ENCODE measurements at regions of chr11 and their contacts with region 1.

Region 1: GRCh38 chr11:66344550-66345315 is at the start of gene BRMS1:
- DNase-seq: peak; percentile 99
- H3K4me3 Mint-ChIP-seq: peak within 1 kb of the TSS; percentile 93
- H3K27ac Mint-ChIP-seq: peak within 1 kb of the TSS; percentile 85
- H3K4me1 Mint-ChIP-seq: peaks cover 42% of the 10 kb centered on the region
- H3K27me3 Mint-ChIP-seq: peaks cover 3% of the 10 kb centered on the region
- total RNA-seq, gene BRMS1: 24.0 to 25.3 TPM

Region 2: DNA sequence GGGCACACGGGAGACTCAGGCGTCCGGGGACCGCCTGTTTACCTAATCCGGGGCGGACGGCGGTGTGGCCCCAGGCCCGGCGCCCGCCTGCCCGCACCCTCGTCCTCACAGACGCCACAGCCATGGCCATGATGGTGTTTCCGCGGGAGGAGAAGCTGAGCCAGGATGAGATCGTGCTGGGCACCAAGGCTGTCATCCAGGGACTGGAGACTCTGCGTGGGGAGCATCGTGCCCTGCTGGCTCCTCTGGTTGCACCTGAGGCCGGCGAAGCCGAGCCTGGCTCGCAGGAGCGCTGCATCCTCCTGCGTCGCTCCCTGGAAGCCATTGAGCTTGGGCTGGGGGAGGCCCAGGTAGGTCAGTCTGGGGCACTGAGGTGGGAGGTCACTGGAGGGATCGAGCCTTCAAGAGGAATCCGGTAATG is 86.2 kb before region 1 on chr11:
- CTCF ChIA-PET with region 1: interaction called, 4 read pairs
- intact Hi-C with region 1: loop called (anchors 1 kb)
- DNase-seq: no peak
- H3K4me3 Mint-ChIP-seq: peak overlapping the region; percentile 95
- H3K27ac Mint-ChIP-seq: peak overlapping the region; percentile 79
- H3K4me1 Mint-ChIP-seq: peaks cover 30% of the 10 kb centered on the region
- H3K27me3 Mint-ChIP-seq: no peaks in the 10 kb centered on the region

Region 3: DNA sequence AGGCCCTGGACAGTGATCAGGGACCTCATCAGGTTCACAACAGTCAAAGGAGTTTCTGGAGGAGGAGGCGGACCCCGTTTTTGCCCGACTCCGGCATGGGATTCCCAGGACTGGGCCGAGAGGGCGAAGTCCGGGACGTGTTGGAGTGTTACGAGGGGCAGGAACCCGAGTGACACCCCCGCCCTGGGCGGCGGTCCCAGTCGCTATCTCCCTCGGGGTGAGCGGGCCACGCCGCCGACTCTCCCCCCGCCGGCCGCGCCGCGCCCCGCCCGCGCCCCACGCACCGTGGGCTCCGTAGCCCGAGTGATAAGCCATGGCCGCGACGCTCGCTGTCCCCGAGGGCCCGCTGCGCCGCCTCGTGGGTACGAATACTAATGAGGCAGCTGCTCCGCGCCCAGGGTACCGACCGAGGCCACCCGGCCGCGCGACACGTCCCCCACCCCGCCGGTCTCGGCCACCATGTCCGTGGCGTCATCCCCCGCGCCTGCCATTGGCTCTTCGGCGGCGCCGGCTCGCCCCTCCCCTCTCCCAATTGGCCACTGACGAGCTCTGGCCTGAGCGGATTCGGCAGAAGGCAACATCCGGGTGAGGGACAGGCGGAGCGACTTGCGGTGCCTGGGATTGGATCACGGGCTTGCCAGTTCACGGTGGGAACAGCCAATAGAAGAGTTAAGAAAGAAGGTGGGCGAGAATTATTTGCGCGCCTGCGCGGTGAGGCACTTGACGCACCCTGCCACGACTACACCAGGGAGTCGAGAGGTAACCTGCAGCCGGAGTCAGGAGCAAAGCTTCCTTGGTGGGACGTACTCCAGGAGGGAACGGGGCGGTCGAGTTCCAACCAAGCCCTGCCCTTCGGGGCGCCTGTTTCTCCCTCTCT is 55.8 kb before region 1 on chr11 and contains the start of gene YIF1A:
- CTCF ChIA-PET with region 1: no interaction called
- intact Hi-C with region 1: loop called (anchors 1 kb)
- DNase-seq: peak; percentile 99
- H3K4me3 Mint-ChIP-seq: peak within 1 kb of the TSS; percentile 81
- H3K27ac Mint-ChIP-seq: peak within 1 kb of the TSS; percentile 70
- H3K4me1 Mint-ChIP-seq: peaks cover 35% of the 10 kb centered on the region
- H3K27me3 Mint-ChIP-seq: peaks cover 18% of the 10 kb centered on the region
- total RNA-seq, gene YIF1A: 45.9 to 49.7 TPM

Region 4: GRCh38 chr11:66311965-66312548 is 32.7 kb before region 1 on chr11:
- CTCF ChIA-PET with region 1: interaction called, 32 read pairs
- intact Hi-C with region 1: loop called (anchors 1 kb)
- DNase-seq: peak; percentile 96
- H3K4me3 Mint-ChIP-seq: peak overlapping the region; percentile 92
- H3K27ac Mint-ChIP-seq: peak overlapping the region; percentile 93
- H3K4me1 Mint-ChIP-seq: peaks cover 33% of the 10 kb centered on the region
- H3K27me3 Mint-ChIP-seq: no peaks in the 10 kb centered on the region

Region 5: GRCh38 chr11:66328307-66329144 is 16.2 kb before region 1 on chr11:
- CTCF ChIA-PET with region 1: interaction called, 3 read pairs
- intact Hi-C with region 1: loop called (anchors 1 kb)
- DNase-seq: peak; percentile 90
- H3K4me3 Mint-ChIP-seq: peak overlapping the region; percentile 34
- H3K27ac Mint-ChIP-seq: peak overlapping the region; percentile 74
- H3K4me1 Mint-ChIP-seq: peaks cover 38% of the 10 kb centered on the region
- H3K27me3 Mint-ChIP-seq: no peaks in the 10 kb centered on the region

Region 6: DNA sequence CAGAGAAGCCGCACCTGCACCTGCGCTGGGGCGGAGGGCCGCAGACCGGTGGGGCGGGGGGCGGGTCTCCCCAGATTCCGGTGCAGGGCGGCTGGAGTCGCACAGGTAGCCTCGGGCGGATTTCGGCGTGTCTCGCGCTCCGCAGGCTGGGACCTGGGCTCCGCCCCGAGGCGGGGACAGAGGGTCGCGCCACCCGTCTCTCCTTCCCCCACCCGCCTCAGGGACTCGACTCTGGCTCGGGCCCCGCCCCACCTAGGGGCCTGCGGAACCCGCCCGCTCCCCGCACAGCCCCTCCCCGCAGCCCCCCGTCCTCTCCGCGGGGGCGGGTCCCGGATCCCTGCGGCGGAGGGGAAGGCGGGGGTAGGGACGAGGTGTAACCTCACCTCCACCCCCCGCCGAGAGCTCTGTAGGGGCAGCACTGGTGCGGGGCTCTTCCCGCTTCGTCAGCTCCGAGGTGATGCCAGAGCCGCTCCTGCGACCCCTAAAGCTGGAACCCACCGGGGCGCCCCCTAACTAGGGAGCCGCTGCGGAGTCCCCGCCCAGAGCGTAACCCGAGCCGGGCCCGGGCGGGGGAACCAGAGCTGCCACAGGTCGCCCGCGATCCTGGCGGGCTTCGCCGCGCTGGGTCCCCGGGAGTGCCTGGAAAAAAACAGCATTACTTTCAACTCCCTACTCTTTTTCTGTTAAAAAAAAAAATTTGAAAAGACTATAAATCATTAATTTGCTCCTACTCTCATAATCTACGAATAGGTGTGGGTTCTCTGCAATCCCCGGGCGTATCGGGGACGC is 27.1 kb after region 1 on chr11 and contains the start of gene SLC29A2:
- CTCF ChIA-PET with region 1: interaction called, 3 read pairs
- intact Hi-C with region 1: loop called (anchors 2 kb)
- DNase-seq: peak; percentile 80
- H3K4me3 Mint-ChIP-seq: peak within 1 kb of the TSS; percentile 83
- H3K27ac Mint-ChIP-seq: peak within 1 kb of the TSS; percentile 90
- H3K4me1 Mint-ChIP-seq: peaks cover 15% of the 10 kb centered on the region
- H3K27me3 Mint-ChIP-seq: no peaks in the 10 kb centered on the region
- total RNA-seq, gene SLC29A2: 6.6 to 7.4 TPM

Region 7: DNA sequence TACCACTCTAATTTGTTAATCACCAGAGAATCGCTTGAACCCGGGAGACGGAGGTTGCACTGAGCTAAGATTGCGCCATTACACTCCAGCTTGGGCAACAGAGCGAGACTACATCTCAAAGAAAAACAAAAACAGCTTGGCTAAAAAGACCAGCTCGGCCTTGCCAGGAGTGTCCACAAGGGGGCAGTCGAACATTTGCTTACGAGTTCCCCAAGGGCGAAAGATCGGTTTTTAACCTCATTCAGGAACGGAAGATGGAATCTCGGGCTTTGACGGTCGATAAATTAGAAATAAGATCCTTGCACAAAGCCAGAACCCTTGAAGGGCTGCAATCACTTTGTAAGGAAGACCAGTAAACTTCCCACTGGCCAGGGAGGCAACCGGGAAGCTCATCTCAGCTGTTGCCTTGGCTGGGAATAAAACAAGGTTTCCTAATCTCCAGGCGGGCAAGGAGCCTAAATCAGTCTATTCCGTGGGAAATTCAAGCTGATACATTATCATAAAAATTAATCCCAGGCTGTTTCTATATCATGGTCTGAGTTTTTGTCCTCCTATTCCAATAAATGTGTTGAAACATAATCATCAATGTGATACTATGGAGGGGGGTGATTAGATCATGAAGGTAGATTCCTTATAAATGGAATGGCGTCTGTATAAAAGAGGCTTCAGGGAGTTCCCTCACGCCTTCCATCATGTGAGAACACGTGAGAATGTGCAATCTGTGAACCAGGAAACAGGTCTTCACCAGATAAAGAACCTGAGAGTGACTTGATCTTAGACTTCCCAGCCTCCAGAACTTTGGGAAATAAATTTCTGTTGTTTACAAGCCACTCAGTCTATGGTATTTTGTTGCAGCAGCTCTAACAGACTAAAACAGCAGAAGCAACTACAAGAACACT is 41.7 kb after region 1 on chr11:
- CTCF ChIA-PET with region 1: interaction called, 15 read pairs
- intact Hi-C with region 1: loop called (anchors 5 kb)
- DNase-seq: peak; percentile 93
- H3K4me3 Mint-ChIP-seq: peak overlapping the region; percentile 17
- H3K27ac Mint-ChIP-seq: no peak overlapping the region
- H3K4me1 Mint-ChIP-seq: peaks cover 6% of the 10 kb centered on the region
- H3K27me3 Mint-ChIP-seq: no peaks in the 10 kb centered on the region